MCF 10A (cell line): ENCODE measurements at regions of chr21 and their contacts with region 1.

Region 1: GRCh38 chr21:29287383-29287782 is 11.3 kb upstream of the BACH1 start:
- DNase-seq: no peak
- H3K4me3 Mint-ChIP-seq: no peak overlapping the region
- H3K27ac Mint-ChIP-seq: no peak overlapping the region
- H3K4me1 Mint-ChIP-seq: peaks cover 17% of the 10 kb centered on the region
- H3K27me3 Mint-ChIP-seq: no peaks in the 10 kb centered on the region
- CTCF ChIP-seq: no peak

Region 2: GRCh38 chr21:29175408-29176134 is 111.8 kb before region 1 on chr21:
- CTCF ChIA-PET with region 1: interaction called, 13 read pairs
- POLR2A ChIA-PET with region 1: no interaction called
- intact Hi-C with region 1: no loop called
- DNase-seq: peak; percentile 65
- H3K4me3 Mint-ChIP-seq: no peak overlapping the region
- H3K27ac Mint-ChIP-seq: peak overlapping the region; percentile 84
- H3K4me1 Mint-ChIP-seq: peaks cover 13% of the 10 kb centered on the region
- H3K27me3 Mint-ChIP-seq: no peaks in the 10 kb centered on the region
- CTCF ChIP-seq: no peak